Mucosa of descending colon (tissue), 3 donors: ENCODE measurements at regions of chr14 and their contacts with region 1.

Region 1: GRCh38 chr14:96100161-96101029 is 61.2 kb downstream of the C14orf132 start:
- DNase-seq: peak in 2 of 3 donors; percentile 82 to 90
- ATAC-seq: peak; percentile 56
- H3K4me3 ChIP-seq: no peak overlapping the region
- H3K4me1 ChIP-seq: no peaks in the 10 kb centered on the region
- CTCF ChIP-seq: peak; percentile 70

Region 2: DNA sequence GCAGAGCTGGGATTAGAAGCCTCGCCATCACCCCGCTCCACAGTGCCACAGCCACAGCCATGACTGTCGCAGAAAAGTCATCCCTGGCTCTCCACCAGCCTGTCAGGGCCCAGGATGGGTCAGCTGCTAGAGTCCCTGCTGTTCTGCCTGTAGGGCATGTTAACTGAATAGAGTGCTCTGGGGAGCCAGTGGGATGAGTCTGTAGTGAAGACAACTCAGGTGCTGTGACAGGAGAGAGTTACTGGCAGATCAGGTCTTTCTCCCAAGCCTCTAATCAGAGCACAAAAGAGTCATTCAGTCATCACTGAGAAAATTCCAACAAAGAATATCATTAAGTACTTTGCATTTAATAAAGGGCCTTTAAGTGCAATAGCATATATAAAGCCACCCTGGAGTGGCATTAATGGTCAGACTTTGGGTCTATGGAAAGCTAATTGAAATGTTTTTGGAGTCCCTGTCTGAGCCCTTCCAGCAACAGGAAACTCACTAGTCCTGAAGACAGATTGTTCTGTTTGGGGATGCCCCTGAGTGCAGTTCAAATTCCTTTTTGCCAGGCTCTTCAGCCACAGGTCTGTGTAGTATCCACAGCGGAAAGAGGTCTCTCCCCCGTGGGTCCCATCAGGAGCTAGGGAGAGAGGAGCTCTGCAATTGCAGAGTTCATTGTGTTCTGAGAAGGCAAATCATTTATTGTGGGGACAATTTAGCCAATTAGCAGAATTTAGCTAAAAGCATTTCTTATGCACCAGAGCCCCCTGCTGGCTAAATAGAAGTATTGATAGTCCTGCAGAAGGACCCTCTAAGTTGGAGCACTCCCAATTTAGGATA is 106.4 kb before region 1 on chr14:
- intact Hi-C with region 1: loop called in 1 of 2 experiments (anchors 10 kb)
- DNase-seq: peak in 1 of 3 donors; percentile 7
- ATAC-seq: no peak
- H3K4me3 ChIP-seq: no peak overlapping the region
- H3K4me1 ChIP-seq: no peaks in the 10 kb centered on the region
- CTCF ChIP-seq: peak; percentile 29

Region 3: DNA sequence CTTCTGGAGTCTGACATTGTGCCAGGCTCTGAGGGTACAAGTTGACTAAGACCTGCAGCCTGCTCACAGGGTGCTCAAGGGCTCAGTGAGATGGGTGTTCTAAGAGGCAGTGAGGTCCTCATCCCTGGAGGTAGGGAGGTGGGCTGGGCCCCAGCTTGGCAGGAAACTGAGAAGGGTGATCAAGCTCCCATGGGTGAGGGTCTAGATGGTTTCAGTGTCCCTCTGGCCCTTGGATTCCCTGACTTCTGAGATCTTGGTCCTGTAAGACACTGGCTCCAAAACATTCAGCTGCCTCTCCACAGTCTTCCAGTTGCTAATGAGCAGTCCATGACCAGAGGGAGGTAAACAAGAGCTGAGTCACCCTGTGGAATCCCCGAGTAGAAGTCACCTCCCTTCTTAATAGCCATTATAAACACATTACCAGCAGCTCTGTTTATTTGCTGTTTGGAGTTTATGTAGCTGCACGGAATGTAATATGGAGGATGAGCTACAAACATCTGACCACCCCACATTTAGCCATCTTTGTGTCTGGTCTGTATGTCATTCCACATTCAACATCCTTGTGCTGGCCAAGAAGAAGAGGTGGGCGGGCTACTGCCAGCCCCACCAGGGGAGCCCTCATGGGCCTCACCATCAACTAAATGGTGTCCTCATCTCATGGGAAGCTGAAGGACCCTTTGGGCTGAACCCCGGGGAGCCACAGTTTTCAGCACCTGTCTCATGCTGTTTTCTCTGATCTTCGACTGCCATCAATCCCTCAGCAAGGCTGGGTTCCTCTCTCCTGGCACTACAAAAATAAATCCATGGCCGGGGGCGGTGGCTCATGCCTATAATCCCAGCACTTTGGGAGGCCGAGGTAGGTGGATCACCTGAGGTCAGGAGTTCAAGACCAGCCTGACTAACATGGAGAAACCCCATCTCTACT is 67.1 kb after region 1 on chr14:
- intact Hi-C with region 1: loop called in 1 of 2 experiments (anchors 10 kb)
- DNase-seq: peak in 1 of 3 donors; percentile 46
- ATAC-seq: peak; percentile 89
- H3K4me3 ChIP-seq: no peak overlapping the region
- H3K4me1 ChIP-seq: peaks cover 15% of the 10 kb centered on the region
- CTCF ChIP-seq: no peak

Region 4: GRCh38 chr14:96275177-96276112 is 175.1 kb after region 1 on chr14:
- intact Hi-C with region 1: loop called (anchors 2 to 5 kb)
- DNase-seq: peak in 2 of 3 donors; percentile 83 to 84
- ATAC-seq: peak; percentile 71
- H3K4me3 ChIP-seq: no peak overlapping the region
- H3K4me1 ChIP-seq: peaks cover 4% of the 10 kb centered on the region
- CTCF ChIP-seq: peak; percentile 82

Region 5: DNA sequence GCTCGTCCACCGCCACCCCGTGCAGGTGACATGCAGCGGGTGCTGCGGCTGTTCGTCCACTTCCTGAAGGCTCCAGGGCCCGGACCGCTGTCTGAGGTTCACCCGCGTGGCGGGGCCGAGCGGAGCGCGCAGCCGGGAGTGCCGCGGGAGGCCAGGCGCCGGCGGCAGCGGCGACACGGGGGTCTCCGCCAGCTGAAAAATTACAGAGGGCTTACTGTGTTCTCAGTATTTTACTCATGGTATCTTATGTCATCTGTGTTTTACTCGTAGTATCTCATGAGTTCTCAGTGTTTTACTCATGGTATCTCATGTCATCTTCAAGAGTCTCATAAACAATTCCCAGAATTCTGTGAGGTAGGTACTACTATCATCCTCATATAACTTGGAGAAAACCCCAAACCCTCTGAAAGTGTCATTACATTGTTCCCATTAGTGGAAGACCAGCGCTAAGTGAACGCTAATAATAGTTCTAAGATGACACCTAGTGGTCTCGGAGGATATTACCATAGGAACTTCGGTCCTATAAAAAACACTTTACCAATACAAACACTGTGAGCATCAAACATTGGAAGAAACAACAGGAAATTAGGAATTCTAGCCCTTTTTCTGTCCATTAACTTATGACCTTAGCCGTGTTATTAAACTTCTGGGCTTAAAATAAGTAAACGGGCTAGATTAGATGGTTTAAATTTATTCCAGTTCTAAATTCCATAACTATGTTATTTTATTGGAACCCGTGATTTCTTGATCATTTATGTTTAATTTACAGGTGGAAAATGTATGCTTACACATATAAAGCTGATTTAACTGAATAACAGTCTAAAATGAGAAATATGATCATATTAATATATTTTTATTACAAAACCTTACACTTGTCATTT is 324.0 kb after region 1 on chr14:
- intact Hi-C with region 1: loop called in 1 of 2 experiments (anchors 10 kb)
- DNase-seq: peak; percentile 61 to 72 (median 66)
- ATAC-seq: peak; percentile 96
- H3K4me3 ChIP-seq: no peak overlapping the region
- H3K4me1 ChIP-seq: no peaks in the 10 kb centered on the region
- CTCF ChIP-seq: peak; percentile 58